CD8-positive, alpha-beta memory T cell (primary cell): ENCODE measurements at regions of chr3 and their contacts with region 1.

Region 1: GRCh38 chr3:115692887-115693524 is 69.7 kb downstream of the GAP43 start:
- DNase-seq: peak; percentile 24 to 68 (median 41)
- H3K4me3 ChIP-seq: no peak overlapping the region
- H3K4me3 Mint-ChIP-seq: no peak overlapping the region
- H3K27ac ChIP-seq: no peak overlapping the region
- H3K27ac Mint-ChIP-seq: no peak overlapping the region
- H3K4me1 ChIP-seq: no peaks in the 10 kb centered on the region
- H3K4me1 Mint-ChIP-seq: peaks cover 0 to 4% (median 2%) of the 10 kb centered on the region in 3 donors
- H3K27me3 ChIP-seq: no peaks in the 10 kb centered on the region
- H3K27me3 Mint-ChIP-seq: peaks cover 0 to 2% of the 10 kb centered on the region in 2 donors

Region 2: GRCh38 chr3:115658337-115659181 is 34.4 kb before region 1 on chr3:
- CTCF ChIA-PET with region 1: no interaction called
- POLR2A ChIA-PET with region 1: interaction called, 11 read pairs
- DNase-seq: peak; percentile 50 to 83 (median 68)
- H3K4me3 ChIP-seq: peak overlapping the region; percentile 67
- H3K4me3 Mint-ChIP-seq: peak overlapping the region; percentile 91 to 99 (median 96)
- H3K27ac ChIP-seq: peak overlapping the region; percentile 84
- H3K27ac Mint-ChIP-seq: peak overlapping the region; percentile 98 to 100 (median 100)
- H3K4me1 ChIP-seq: peaks cover 15% of the 10 kb centered on the region
- H3K4me1 Mint-ChIP-seq: peaks cover 25 to 37% (median 26%) of the 10 kb centered on the region in 3 donors
- H3K27me3 ChIP-seq: no peaks in the 10 kb centered on the region
- H3K27me3 Mint-ChIP-seq: no peaks in the 10 kb centered on the region